Heart right ventricle (tissue), 16 donors: ENCODE measurements at regions of chr2 and their contacts with region 1.

Region 1: GRCh38 chr2:98412751-98413458 is 31.8 kb upstream of the INPP4A start:
- DNase-seq: peak in 1 of 2 donors; percentile 56
- ATAC-seq: peak; percentile 74 to 91 (median 82)
- H3K4me3 ChIP-seq: no peak overlapping the region
- H3K27ac ChIP-seq: no peak overlapping the region
- H3K4me1 ChIP-seq: peaks cover 0 to 8% (median 5%) of the 10 kb centered on the region in 9 donors
- H3K27me3 ChIP-seq: no peaks in the 10 kb centered on the region
- CTCF ChIP-seq: peak; percentile 73 to 88 (median 80)

Region 2: GRCh38 chr2:98518090-98518489 is 105.2 kb after region 1 on chr2:
- intact Hi-C with region 1: loop called in 8 of 10 experiments (anchors 2 to 10 kb)
- DNase-seq: peak; percentile 34 to 36
- ATAC-seq: peak in 7 of 8 donors; percentile 34 to 65 (median 53)
- H3K4me3 ChIP-seq: no peak overlapping the region
- H3K27ac ChIP-seq: peak overlapping the region in 1 of 10 donors; percentile 49
- H3K4me1 ChIP-seq: peaks cover 5 to 61% (median 18%) of the 10 kb centered on the region in 9 donors
- H3K27me3 ChIP-seq: no peaks in the 10 kb centered on the region
- CTCF ChIP-seq: peak in 8 of 9 donors; percentile 24 to 65 (median 55)

Region 3: DNA sequence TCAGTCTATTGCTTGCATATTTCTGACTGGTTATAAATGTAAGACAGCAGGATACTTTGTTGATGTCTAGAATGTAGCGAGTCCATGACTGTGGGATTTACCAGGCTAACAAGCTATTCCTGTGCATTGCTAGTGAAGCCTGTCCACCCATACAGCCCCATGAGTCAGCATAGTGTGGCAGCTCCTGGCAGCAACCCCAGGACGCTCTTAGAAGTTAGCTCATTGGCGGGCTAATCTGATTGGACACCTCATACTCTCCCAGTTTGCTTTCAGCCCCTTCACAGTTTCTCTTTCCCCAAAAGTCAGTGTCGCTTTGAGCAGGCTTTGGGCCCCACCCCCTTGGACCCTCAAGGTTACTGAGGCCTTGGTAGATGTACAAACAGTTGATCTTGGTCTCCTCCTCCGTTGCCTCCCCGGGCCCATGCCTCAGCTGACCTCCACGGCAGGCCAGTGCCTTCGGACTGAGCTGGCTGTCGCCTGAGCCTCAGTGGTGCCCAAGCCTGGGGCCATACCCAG is 147.4 kb after region 1 on chr2:
- intact Hi-C with region 1: loop called in 2 of 10 experiments (anchors 10 kb)
- DNase-seq: peak; percentile 51 to 73
- ATAC-seq: peak; percentile 66 to 94 (median 84)
- H3K4me3 ChIP-seq: no peak overlapping the region
- H3K27ac ChIP-seq: peak overlapping the region; percentile 34 to 89 (median 67)
- H3K4me1 ChIP-seq: peaks cover 16 to 86% (median 52%) of the 10 kb centered on the region in 9 donors
- H3K27me3 ChIP-seq: no peaks in the 10 kb centered on the region
- CTCF ChIP-seq: no peak

Region 4: GRCh38 chr2:98577313-98577712 is 164.4 kb after region 1 on chr2:
- intact Hi-C with region 1: loop called in 4 of 10 experiments (anchors 10 kb)
- DNase-seq: no peak
- ATAC-seq: peak in 6 of 8 donors; percentile 39 to 67 (median 47)
- H3K4me3 ChIP-seq: no peak overlapping the region
- H3K27ac ChIP-seq: no peak overlapping the region
- H3K4me1 ChIP-seq: peaks cover 0 to 11% (median 0%) of the 10 kb centered on the region in 9 donors
- H3K27me3 ChIP-seq: no peaks in the 10 kb centered on the region
- CTCF ChIP-seq: peak in 7 of 9 donors; percentile 25 to 50 (median 40)

Region 5: DNA sequence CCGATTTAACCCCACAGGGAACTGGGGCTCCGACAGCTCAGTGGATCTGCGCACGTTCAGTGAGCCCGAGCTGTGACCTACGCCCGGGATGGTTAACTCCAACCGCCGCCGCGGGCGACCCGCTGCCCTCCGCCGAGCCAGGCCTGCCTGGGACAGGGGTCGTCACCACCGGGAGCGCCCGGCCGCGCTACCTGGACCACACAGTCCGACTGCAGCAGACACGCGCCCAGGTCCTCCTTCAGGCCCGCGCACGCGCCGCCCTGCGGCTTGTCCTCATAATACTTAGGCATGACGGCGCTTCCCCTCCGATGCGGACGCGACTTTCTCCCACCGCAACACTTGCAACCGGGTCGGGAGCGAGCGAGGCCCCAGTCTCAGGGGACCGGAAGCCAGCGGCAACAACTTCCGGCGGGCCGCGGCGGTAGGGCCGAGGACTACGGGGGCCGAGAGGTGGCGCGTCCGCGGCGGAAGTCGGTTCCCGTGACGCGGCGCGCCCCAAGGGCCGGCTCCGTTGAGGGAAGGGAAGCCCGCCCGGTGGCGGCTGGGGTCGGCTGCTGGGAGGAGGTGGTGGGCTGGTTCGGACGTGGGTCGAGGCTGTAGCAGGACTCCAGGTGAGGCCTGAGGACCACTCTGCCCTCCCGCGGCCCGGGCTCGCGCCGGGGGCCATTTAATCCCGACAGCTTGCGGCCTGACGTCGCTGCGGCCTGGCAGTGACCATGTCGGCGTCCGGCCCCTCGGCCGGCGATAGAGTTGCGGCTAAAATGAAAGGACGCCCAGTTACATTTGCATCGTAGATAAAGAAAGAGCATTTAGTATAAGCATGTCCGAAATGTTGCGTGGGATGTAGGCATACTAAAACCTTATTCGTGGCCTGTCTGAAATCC is 195.5 kb after region 1 on chr2 and contains the starts of genes COA5 and UNC50:
- intact Hi-C with region 1: loop called in 5 of 10 experiments (anchors 5 to 10 kb)
- DNase-seq: peak; percentile 92
- ATAC-seq: peak; percentile 96 to 99 (median 98)
- H3K4me3 ChIP-seq: peak within 1 kb of the TSS; percentile 62 to 99 (median 94)
- H3K27ac ChIP-seq: peak within 1 kb of the TSS; percentile 84 to 100 (median 96)
- H3K4me1 ChIP-seq: peaks cover 16 to 65% (median 54%) of the 10 kb centered on the region in 9 donors
- H3K27me3 ChIP-seq: no peaks in the 10 kb centered on the region
- CTCF ChIP-seq: peak in 3 of 9 donors; percentile 2 to 18 (median 9)
- total RNA-seq, gene COA5: 20.2 to 33.8 (median 26.0) TPM
- total RNA-seq, gene UNC50: 21.3 to 34.2 (median 25.3) TPM